Naive thymus-derived CD8-positive, alpha-beta T cell (primary cell): ENCODE measurements at regions of chr16 and their contacts with region 1.

Region 1: DNA sequence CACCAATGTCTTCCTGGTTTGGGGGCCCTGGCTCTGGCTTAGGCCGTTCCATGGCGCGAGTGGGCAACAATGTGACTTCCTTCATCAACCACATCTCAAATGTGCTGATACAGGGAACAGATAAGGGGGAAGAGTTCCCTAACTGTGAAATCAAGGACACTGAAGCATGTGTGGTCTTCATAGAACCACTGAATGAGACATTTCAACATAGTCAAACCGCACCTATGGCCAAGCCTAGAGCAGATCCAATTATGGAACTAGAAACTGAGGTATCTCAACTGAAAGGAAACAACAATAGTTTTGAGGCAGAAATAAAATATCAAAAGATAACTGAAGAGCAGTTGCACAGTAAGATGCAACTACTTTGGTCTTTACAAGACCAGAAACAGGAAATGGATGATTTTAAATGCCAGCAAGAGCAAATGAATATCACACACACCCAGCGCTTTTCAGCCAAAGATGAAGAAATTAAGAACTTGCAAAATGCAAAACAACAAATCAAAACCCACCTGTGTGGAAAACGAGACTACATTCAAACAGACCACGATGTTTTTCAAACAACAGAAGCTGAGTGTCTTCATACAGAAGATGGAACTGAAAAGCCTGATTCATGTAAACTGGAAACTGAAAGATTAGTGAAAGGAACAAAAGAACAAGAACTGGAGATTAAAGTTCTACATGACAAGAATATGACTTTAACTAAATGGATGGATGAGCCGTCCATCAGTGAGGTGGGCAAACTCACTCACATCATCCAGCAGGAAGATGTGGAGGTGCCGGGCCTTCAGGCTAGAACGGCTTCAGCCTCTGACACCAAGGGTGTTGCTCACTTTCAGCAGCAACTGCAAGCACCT is 18.1 kb upstream of the LCMT1 start:
- DNase-seq: peak in 3 of 10 donors; percentile 29 to 45 (median 45)
- ATAC-seq: peak; percentile 61 to 77
- H3K4me3 Mint-ChIP-seq: peak overlapping the region; percentile 4 to 68 (median 60)
- H3K27ac Mint-ChIP-seq: peak overlapping the region; percentile 86 to 98 (median 92)
- H3K4me1 Mint-ChIP-seq: peaks cover 21 to 40% (median 33%) of the 10 kb centered on the region in 4 donors
- H3K27me3 Mint-ChIP-seq: no peaks in the 10 kb centered on the region

Region 2: DNA sequence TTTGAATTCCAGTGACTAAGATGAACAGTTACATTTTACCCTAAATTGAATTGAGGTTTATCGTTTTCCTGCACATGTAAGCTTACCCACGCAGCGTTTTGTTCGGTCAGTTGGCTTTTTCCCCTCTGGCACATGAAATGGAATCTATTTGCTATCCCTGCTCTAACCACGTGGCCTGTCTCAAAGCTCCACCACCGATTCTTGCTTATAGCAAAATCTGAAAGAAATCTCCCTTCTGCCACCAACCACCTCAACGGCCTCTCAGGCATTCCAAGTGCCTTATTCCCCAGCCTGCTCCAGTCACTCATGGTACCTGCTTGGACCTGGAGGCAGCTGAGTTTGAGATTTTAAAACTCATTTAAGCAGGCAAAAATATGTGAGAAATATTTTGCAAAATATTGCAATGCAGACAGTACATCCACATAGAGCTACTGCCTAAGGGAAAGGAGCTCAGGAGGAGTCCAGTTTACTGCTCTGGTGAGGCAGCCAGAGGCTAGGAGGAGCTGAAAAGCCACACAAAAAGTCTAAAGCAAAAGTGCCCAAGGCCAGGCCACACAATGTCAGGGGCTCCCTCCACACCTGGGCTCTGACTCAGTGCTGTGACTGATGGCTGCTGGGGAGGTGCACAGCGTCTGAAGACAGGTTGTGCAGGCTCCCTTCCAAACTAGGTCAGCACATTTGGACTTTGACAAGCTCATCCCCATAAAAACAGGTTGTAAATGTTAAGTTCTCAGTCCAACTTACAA is 104.7 kb before region 1 on chr16:
- POLR2A ChIA-PET with region 1: no interaction called
- DNase-seq: no peak
- ATAC-seq: no peak
- H3K4me3 Mint-ChIP-seq: peak overlapping the region in 3 of 10 donors; percentile 5 to 45 (median 19)
- H3K27ac Mint-ChIP-seq: peak overlapping the region in 9 of 10 donors; percentile 24 to 83 (median 68)
- H3K4me1 Mint-ChIP-seq: peaks cover 45 to 93% (median 84%) of the 10 kb centered on the region in 4 donors
- H3K27me3 Mint-ChIP-seq: no peaks in the 10 kb centered on the region

Region 3: GRCh38 chr16:25006469-25007055 is 86.9 kb before region 1 on chr16:
- POLR2A ChIA-PET with region 1: no interaction called
- DNase-seq: no peak
- ATAC-seq: no peak
- H3K4me3 Mint-ChIP-seq: peak overlapping the region in 2 of 10 donors; percentile 0 to 30
- H3K27ac Mint-ChIP-seq: peak overlapping the region in 4 of 10 donors; percentile 1 to 52 (median 28)
- H3K4me1 Mint-ChIP-seq: peaks cover 25 to 82% (median 66%) of the 10 kb centered on the region in 4 donors
- H3K27me3 Mint-ChIP-seq: no peaks in the 10 kb centered on the region

Region 4: GRCh38 chr16:25060920-25061319 is 32.5 kb before region 1 on chr16:
- POLR2A ChIA-PET with region 1: interaction called, 15 read pairs
- DNase-seq: peak in 9 of 10 donors; percentile 6 to 85 (median 52)
- ATAC-seq: peak; percentile 98 to 100
- H3K4me3 Mint-ChIP-seq: peak overlapping the region; percentile 67 to 88 (median 82)
- H3K27ac Mint-ChIP-seq: peak overlapping the region; percentile 91 to 100 (median 97)
- H3K4me1 Mint-ChIP-seq: peaks cover 29 to 71% (median 63%) of the 10 kb centered on the region in 4 donors
- H3K27me3 Mint-ChIP-seq: no peaks in the 10 kb centered on the region

Region 5: GRCh38 chr16:25066747-25067631 is 26.4 kb before region 1 on chr16:
- POLR2A ChIA-PET with region 1: interaction called, 15 read pairs
- DNase-seq: peak; percentile 49 to 91 (median 78)
- ATAC-seq: peak; percentile 94 to 95
- H3K4me3 Mint-ChIP-seq: peak overlapping the region; percentile 82 to 97 (median 94)
- H3K27ac Mint-ChIP-seq: peak overlapping the region; percentile 76 to 96 (median 94)
- H3K4me1 Mint-ChIP-seq: peaks cover 19 to 56% (median 54%) of the 10 kb centered on the region in 4 donors
- H3K27me3 Mint-ChIP-seq: no peaks in the 10 kb centered on the region